K562 (cell line): ENCODE measurements at regions of chr1 and their contacts with region 1.

Region 1: DNA sequence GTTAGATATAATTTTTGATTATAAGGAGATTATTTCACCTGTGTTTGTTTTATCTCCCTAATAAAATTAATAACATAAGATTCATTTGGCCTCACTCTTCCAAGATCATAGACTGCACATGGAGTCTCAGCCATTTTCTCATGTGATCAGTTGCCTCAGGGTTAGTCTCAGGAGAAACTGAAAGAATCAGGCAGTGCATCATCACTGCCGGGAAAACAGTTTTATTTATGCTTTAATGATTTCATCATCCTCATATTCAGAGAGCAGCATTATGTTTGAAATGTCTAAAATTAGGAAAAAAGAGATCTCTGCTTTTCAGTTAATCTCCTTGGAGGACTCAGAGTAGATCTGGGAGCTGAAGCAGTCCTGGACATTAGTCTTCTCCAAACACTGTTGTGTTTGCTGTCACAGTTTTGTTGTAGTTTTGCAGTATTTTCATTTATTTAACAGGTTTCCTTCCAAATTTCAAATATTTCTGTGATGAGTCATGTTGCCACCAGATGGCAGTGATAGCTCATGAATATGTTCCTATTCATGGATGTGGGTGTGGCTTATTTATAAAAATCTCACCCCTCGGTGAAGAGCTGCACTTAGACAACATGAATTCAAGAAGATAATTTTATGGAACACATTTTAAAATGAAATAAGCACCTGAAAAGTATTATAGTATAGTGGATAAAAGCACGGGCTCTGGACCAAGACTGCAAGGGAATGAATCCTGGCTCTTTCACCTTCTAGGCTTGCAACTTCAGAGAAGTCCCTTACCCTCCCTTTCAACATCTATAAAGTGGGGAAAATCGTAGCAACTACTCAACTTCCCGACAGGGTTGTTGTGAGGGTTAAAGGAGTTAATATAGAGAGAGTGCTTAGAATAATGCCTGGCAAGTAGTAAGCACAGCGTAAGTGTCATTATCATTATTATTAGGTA is 31.2 kb downstream of the CHD1L start:
- DNase-seq: peak; percentile 70 to 72 (median 72)
- ATAC-seq: peak; percentile 86
- H3K4me3 ChIP-seq: no peak overlapping the region
- H3K27ac ChIP-seq: no peak overlapping the region
- H3K4me1 ChIP-seq: peaks cover 0 to 2% of the 10 kb centered on the region in 2 experiments; a peak in 2 of 5 replicates
- H3K27me3 ChIP-seq: no peaks in the 10 kb centered on the region
- CTCF ChIP-seq: peak; percentile 49 to 76 (median 62); a peak in 5 of 6 replicates
- EP300 ChIP-seq: no peak
- POLR2A ChIP-seq: no peak
- RAD21 ChIP-seq: peak; percentile 84 to 88

Region 2: DNA sequence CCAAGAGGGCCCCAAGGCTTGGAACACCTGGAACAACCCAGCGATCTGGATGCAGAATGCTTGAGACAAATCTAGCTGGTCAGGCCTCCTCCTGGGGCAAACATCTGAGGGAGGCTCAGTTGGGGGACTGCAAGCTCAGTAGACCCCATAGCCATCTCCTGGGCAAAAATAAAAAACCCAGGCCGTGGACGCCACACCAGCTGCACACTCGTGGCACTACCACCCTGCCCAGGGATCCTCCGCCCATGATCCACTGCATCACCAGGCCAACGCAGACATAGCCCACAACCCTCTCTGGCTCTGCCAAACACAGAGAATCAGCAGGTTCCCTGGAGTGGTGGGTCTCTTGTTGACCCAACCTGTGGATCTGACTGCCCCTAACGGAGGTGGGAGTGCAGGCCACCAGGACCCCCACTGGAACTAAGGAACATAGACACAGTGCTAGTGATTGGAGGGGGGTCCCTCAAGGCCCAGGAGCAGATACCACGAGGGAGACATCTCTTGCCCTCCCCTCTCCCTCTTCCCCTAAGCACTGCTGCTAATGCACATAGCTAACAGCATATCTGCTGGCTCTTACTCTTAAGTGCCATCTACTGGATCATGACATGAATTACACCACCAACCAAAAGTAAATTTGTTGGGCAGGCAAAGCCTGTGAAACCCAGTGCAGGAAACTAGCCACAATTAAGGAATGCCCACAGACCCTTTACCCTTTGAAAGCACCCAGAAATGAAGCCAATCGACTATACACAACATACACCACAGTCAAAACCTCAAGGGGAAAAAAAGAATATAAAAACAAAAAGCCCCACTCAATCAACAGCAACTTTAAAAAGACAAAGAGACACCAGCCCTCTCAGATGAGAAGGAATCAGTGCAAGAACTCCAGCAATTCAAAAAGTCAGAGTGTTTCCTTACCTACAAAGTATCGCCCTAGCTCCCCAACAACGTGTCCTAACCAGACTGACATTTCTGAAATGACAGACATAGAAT is 116.2 kb after region 1 on chr1:
- CTCF ChIA-PET with region 1: interaction called, 15 read pairs
- POLR2A ChIA-PET with region 1: interaction called, 4 read pairs
- in situ Hi-C with region 1: loop called (anchors 5 kb)
- intact Hi-C with region 1: loop called (anchors 5 kb)
- DNase-seq: peak; percentile 47 to 66 (median 56)
- ATAC-seq: peak; percentile 96
- H3K4me3 ChIP-seq: no peak overlapping the region
- H3K27ac ChIP-seq: no peak overlapping the region
- H3K4me1 ChIP-seq: peaks cover 0 to 9% of the 10 kb centered on the region in 2 experiments; a peak in 2 of 5 replicates
- H3K27me3 ChIP-seq: no peaks in the 10 kb centered on the region
- CTCF ChIP-seq: peak; percentile 73 to 83 (median 78)
- EP300 ChIP-seq: no peak
- POLR2A ChIP-seq: no peak
- RAD21 ChIP-seq: peak; percentile 86 to 95

Region 3: GRCh38 chr1:147413110-147413605 is 139.5 kb after region 1 on chr1:
- CTCF ChIA-PET with region 1: no interaction called
- POLR2A ChIA-PET with region 1: no interaction called
- in situ Hi-C with region 1: no loop called
- intact Hi-C with region 1: no loop called
- DNase-seq: no peak
- ATAC-seq: no peak
- H3K4me3 ChIP-seq: no peak overlapping the region
- H3K27ac ChIP-seq: no peak overlapping the region
- H3K4me1 ChIP-seq: no peaks in the 10 kb centered on the region
- H3K27me3 ChIP-seq: no peaks in the 10 kb centered on the region
- CTCF ChIP-seq: no peak
- EP300 ChIP-seq: no peak
- POLR2A ChIP-seq: no peak
- RAD21 ChIP-seq: no peak

Region 4: GRCh38 chr1:147627435-147628110 is 353.9 kb after region 1 on chr1:
- CTCF ChIA-PET with region 1: no interaction called
- POLR2A ChIA-PET with region 1: no interaction called
- in situ Hi-C with region 1: no loop called
- intact Hi-C with region 1: loop called (anchors 5 kb)
- DNase-seq: peak; percentile 52 to 79 (median 78)
- ATAC-seq: peak; percentile 85
- H3K4me3 ChIP-seq: no peak overlapping the region
- H3K27ac ChIP-seq: no peak overlapping the region
- H3K4me1 ChIP-seq: no peaks in the 10 kb centered on the region; a peak in 1 of 5 replicates
- H3K27me3 ChIP-seq: peaks cover 0 to 18% of the 10 kb centered on the region in 2 experiments; a peak in 2 of 5 replicates
- CTCF ChIP-seq: peak; percentile 71 to 88 (median 74)
- EP300 ChIP-seq: no peak
- POLR2A ChIP-seq: no peak
- RAD21 ChIP-seq: peak; percentile 50 to 67

Region 5: GRCh38 chr1:147640553-147641165 is 367.0 kb after region 1 on chr1:
- CTCF ChIA-PET with region 1: interaction called, 3 read pairs
- POLR2A ChIA-PET with region 1: interaction called, 5 read pairs
- in situ Hi-C with region 1: no loop called
- intact Hi-C with region 1: loop called (anchors 5 kb)
- DNase-seq: peak; percentile 78 to 83 (median 80)
- ATAC-seq: peak; percentile 100
- H3K4me3 ChIP-seq: no peak overlapping the region
- H3K27ac ChIP-seq: no peak overlapping the region
- H3K4me1 ChIP-seq: peaks cover 0 to 12% of the 10 kb centered on the region in 2 experiments; a peak in 2 of 5 replicates
- H3K27me3 ChIP-seq: 0 out of 5 replicates have a peak, but pooled peaks cover 0 to 2% of the 10 kb centered on the region in 2 experiments
- CTCF ChIP-seq: peak; percentile 83 to 90 (median 83)
- EP300 ChIP-seq: no peak
- POLR2A ChIP-seq: no peak
- RAD21 ChIP-seq: peak; percentile 44 to 61; a peak in 3 of 4 replicates